Left ventricle myocardium inferior (tissue), 1 donor: ENCODE measurements at regions of chr11 and their contacts with region 1.

Region 1: GRCh38 chr11:33687733-33688479 is 12.7 kb downstream of the C11orf91 start:
- DNase-seq: no peak
- H3K4me3 ChIP-seq: no peak overlapping the region
- H3K27ac ChIP-seq: peak overlapping the region; percentile 93
- H3K4me1 ChIP-seq: peaks cover 50% of the 10 kb centered on the region
- H3K27me3 ChIP-seq: no peaks in the 10 kb centered on the region
- CTCF ChIP-seq: peak; percentile 76

Region 2: DNA sequence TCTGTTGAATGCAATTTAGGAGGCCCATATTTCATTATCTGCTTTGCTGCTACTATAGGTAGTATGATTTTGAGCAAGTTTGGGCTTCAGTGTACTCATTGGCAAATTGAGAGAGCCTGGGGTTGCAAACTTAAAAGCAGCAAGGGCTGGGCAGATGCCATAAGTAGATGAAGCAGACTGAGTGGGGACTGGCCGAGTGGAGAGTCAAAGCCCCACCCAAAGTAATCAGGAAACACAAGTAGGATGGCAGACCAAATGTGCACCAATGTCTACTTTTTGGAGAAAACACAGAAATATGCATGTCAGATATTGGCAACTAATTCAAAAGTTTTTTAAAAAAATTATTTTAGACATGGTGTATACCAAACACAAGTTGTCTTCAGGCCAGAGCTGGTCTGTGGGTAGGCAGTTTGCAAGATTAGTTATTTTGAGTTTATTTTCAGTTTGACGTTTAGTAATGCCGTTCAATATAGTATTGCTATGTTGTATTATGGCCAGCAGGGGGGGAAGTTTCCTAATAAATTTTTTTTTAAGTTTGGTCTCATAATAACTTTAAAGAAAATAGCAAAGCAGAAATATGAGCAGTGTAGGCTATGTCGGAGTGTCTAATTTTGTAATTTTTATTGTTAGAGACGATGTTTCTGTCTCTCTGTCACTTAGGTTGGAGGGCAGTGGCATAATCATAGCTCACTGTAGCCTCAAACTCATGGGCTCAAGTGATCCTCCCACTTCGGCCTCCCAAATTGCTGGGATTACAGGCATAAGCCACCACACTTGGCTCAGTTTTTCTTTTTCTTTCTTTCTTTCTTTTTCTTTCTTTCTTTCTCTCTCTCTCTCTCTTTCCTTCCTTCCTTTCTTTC is 325.6 kb before region 1 on chr11:
- intact Hi-C with region 1: loop called (anchors 5 kb)
- DNase-seq: no peak
- H3K4me3 ChIP-seq: no peak overlapping the region
- H3K27ac ChIP-seq: no peak overlapping the region
- H3K4me1 ChIP-seq: peaks cover 11% of the 10 kb centered on the region
- H3K27me3 ChIP-seq: no peaks in the 10 kb centered on the region
- CTCF ChIP-seq: peak; percentile 77

Region 3: GRCh38 chr11:33542921-33543320 is 145.0 kb before region 1 on chr11:
- intact Hi-C with region 1: loop called (anchors 5 kb)
- DNase-seq: peak; percentile 43
- H3K4me3 ChIP-seq: no peak overlapping the region
- H3K27ac ChIP-seq: no peak overlapping the region
- H3K4me1 ChIP-seq: peaks cover 8% of the 10 kb centered on the region
- H3K27me3 ChIP-seq: no peaks in the 10 kb centered on the region
- CTCF ChIP-seq: peak; percentile 74

Region 4: GRCh38 chr11:33802414-33802950 is 114.6 kb after region 1 on chr11:
- intact Hi-C with region 1: no loop called
- DNase-seq: peak; percentile 24
- H3K4me3 ChIP-seq: peak overlapping the region; percentile 49
- H3K27ac ChIP-seq: no peak overlapping the region
- H3K4me1 ChIP-seq: peaks cover 13% of the 10 kb centered on the region
- H3K27me3 ChIP-seq: peaks cover 64% of the 10 kb centered on the region
- CTCF ChIP-seq: no peak